ENCODE measurements at regions of chr5 and their contacts with region 1.

Region 1: DNA sequence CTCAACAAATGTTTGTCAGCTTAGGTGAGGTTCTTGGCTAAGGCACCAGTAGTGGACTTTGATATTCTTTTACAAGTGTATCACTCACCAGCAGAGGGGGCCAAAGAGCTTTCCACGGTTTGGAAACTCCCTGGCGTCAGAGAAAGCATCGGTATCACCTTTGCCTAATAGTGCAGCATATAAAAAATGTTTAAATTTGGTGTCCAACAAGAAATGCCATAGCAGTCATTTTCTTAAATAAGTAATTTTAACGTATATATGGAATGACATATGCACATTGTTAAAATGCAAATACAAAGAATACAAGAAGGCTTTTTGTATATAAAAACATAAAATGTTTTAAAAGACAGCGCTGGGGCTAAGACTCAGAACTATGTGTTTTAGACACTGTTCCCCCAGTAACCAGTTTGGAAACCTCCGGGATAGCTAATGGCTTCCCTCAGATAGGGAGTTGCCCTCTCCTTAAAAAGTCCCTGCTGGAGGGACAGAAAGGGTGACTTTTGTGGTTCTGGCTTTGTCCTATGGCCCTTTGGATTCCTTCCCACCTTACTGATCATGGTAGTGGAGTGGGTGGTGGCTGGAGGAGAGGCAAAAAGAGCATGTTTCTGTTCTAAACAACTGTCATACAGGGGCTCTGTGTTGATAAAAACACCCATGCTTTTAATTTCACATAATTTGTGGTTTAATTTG is 124.6 kb downstream of the GPBP1 start:
- DNase-seq: peak; percentile 24
- H3K4me3 ChIP-seq: no peak overlapping the region
- CTCF ChIP-seq: peak; percentile 63

Region 2: DNA sequence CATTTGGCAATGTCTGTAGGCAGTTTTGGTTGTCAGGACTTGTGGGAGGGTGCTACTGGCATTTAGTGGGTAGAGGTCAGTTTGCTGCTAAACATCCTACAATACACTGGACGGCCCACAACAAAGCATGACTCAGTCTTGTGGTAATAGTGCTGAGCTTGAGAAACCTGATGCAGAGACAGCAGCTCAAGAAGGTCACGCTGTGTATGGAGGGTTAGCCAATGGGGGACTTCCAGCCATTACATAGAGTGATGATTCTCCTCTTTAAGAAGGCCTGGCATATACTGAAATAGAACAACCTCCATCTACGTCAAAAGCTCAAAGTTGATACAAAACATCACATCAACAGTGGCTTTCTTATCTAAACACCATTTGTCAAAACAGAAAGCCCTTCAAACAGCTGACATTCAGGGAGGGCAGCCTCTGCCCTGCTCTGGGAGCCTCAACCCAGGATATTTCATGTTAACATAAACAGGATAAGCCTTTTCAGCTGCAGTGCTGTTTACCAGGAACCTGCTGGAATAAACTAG is 18.4 kb after region 1 on chr5:
- CTCF ChIA-PET with region 1: interaction called, 11 read pairs
- POLR2A ChIA-PET with region 1: no interaction called
- DNase-seq: peak; percentile 71
- H3K4me3 ChIP-seq: no peak overlapping the region
- CTCF ChIP-seq: no peak

Region 3: DNA sequence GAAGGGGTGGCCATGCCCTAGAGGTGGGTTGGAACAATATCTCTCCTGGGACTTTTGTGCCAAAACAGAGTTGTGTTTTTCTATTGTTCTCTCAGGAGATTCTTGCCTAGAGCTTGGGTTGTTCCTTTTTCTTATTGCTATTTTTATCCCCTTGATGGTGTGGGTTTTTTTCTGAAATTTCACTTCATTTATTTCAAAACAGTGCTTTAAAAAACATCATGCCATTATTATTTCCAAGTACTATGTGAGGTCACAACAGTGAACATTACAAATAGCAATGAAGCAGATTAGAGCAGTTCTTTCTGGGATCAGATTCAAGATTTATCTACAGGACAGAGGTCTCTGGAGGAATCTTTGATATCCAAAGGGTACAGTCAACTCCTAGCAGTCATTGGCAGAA is 107.5 kb after region 1 on chr5:
- CTCF ChIA-PET with region 1: no interaction called
- POLR2A ChIA-PET with region 1: no interaction called
- DNase-seq: no peak
- H3K4me3 ChIP-seq: no peak overlapping the region
- CTCF ChIP-seq: no peak

Region 4: DNA sequence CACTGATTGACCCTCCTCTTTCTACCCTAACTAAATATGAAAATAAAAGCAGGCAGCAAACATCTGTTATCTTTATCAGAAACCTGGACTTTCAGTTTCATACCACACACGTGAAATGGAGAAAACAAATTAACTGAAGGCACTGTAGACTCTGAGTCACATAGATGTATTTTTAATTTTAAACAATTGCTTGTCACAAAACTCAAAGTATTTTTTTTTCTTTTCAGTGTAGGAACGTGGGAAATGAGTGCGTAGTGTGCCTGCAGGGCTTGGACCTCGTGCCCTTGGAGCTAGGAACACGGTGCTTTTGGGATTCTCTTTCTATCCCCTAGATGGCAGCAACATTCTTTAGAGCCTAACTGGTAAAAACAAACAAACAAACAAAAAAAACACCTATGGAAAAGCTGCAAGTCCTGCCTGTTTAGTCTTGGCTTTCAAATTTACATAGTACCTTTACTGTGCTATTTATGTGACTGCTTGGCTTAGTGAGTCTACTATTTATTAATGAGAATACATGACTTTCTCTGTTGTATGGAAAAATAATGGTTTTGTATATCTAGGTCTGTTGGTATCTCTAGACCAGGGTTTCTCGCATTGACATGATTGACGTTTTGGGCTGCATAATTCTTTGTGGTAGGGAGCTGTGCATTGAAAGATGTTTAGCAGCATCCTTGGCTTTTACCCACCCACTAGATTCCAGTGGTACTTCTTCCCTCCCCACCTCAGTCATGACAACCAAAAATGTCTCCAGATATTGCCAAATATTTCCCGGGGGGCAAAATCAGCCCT is 201.0 kb after region 1 on chr5:
- CTCF ChIA-PET with region 1: interaction called, 47 read pairs
- POLR2A ChIA-PET with region 1: no interaction called
- DNase-seq: no peak
- H3K4me3 ChIP-seq: no peak overlapping the region
- CTCF ChIP-seq: peak; percentile 61

Region 5: DNA sequence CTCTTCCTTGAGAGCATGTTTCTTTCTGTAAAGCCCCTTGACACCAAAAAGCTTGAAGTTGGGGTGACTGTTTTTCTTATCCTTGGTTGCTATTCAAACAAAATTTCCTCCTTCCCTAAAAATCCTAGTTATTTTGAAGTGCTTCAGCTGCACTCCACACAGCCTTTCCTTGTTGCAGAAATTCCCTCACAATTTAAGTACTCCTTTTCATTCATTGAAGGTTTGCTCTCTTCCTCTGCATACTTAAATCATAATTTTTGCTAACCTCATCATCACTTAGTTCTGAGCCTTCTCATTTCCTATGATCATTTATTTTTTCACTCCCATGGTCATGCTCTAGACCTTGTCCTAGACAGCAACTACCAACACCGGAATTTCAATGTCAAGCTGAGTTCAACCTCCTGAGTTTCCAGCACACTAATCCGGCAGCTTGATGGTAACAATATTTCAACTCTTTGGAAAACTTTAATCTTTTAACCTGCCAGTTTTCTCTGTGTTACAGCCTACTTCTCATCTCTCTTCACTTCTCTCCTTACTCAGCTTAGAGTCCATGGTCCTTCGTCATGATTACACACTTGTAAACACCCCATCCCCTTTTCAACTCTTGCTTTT is 262.9 kb after region 1 on chr5:
- CTCF ChIA-PET with region 1: no interaction called
- POLR2A ChIA-PET with region 1: no interaction called
- DNase-seq: no peak
- H3K4me3 ChIP-seq: no peak overlapping the region
- CTCF ChIP-seq: no peak

Region 6: GRCh38 chr5:57650360-57651069 is 352.1 kb after region 1 on chr5:
- CTCF ChIA-PET with region 1: interaction called, 11 read pairs
- POLR2A ChIA-PET with region 1: no interaction called
- DNase-seq: no peak
- H3K4me3 ChIP-seq: no peak overlapping the region
- CTCF ChIP-seq: peak; percentile 63

Region 7: GRCh38 chr5:57887851-57888621 is 589.6 kb after region 1 on chr5:
- CTCF ChIA-PET with region 1: interaction called, 10 read pairs
- POLR2A ChIA-PET with region 1: no interaction called
- DNase-seq: no peak
- H3K4me3 ChIP-seq: no peak overlapping the region
- CTCF ChIP-seq: peak; percentile 60

Measured in AG04449 (cell line).